ENCODE measurements at regions of chr11 and their contacts with region 1.

Region 1: DNA sequence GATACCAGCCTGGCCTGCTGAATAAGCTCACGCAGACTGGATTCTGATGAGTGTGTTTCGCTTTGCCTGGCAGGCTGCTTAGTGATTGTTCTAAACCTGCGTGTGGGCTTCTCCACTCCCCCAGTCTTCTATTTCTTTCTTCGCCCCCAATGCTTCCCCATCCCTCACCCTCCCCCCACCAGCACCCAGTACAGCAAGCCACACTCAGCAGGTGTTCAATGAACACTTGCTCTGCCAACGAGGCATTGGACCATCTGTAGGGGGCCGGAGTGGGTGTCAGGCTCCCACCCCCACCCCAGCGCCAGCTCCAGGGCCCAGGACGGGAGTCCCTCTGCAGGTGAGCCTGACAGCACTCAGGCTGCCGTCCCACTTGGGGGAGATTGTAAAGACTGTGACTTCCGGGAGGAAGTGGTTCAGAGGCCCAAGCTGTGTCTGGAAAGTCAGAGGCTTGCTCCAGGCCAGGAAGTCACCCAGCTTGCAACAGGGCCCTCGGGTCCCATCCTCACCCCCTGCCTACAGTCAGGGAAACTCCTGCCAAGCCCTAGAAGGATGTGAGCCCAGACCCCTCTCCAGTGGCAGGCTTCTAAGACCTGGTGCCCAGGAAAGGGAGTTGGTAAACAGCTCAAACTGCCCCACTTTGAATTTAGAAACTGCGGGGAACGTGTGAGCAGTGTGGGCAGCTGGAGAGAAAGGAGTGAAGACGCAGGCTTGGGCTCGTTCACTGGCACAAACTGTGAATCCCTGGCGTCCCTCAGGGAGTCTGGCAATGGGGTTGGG is 66.3 kb upstream of the PRDM11 start:
- DNase-seq: peak; percentile 59 to 84 (median 77)
- H3K4me3 ChIP-seq: peak overlapping the region in 1 of 7 experiments; percentile 32
- H3K27ac ChIP-seq: no peak overlapping the region
- H3K4me1 ChIP-seq: peaks cover 19 to 61% (median 46%) of the 10 kb centered on the region in 4 experiments
- H3K27me3 ChIP-seq: no peaks in the 10 kb centered on the region

Region 2: GRCh38 chr11:45025716-45026492 is 54.2 kb before region 1 on chr11:
- CTCF ChIA-PET with region 1: interaction called, 11 read pairs
- POLR2A ChIA-PET with region 1: interaction called, 12 read pairs
- DNase-seq: peak; percentile 96 to 100 (median 99)
- H3K4me3 ChIP-seq: no peak overlapping the region
- H3K27ac ChIP-seq: peak overlapping the region; percentile 59 to 76
- H3K4me1 ChIP-seq: peaks cover 6 to 38% (median 22%) of the 10 kb centered on the region in 4 experiments
- H3K27me3 ChIP-seq: no peaks in the 10 kb centered on the region

Region 3: GRCh38 chr11:45067966-45068365 is 12.2 kb before region 1 on chr11:
- CTCF ChIA-PET with region 1: interaction called, 13 read pairs
- POLR2A ChIA-PET with region 1: no interaction called
- DNase-seq: no peak
- H3K4me3 ChIP-seq: no peak overlapping the region
- H3K27ac ChIP-seq: no peak overlapping the region
- H3K4me1 ChIP-seq: peaks cover 0 to 6% (median 5%) of the 10 kb centered on the region in 4 experiments
- H3K27me3 ChIP-seq: no peaks in the 10 kb centered on the region

Region 4: DNA sequence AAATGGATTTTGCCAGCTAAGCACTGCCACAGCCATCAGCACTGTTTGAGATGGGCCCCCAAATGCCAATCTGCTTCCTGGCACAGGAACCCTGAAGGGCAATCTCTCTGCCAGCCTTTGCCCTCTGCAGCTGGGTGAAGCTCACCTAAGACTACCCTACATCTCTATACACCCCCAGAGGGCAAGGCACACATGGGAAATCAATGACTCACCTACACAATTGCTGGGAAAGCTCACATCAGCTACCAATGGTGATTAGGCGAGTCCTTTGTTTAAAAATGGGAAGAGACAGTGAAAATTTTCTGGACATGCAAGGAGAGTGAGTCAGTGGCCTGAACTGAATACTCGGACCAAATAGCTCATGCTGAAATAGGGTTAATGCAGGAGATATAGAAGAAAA is 53.7 kb after region 1 on chr11:
- CTCF ChIA-PET with region 1: no interaction called
- POLR2A ChIA-PET with region 1: no interaction called
- DNase-seq: no peak
- H3K4me3 ChIP-seq: no peak overlapping the region
- H3K27ac ChIP-seq: no peak overlapping the region
- H3K4me1 ChIP-seq: no peaks in the 10 kb centered on the region
- H3K27me3 ChIP-seq: peaks cover 0 to 12% (median 6%) of the 10 kb centered on the region in 5 experiments